ENCODE measurements at regions of chr17 and their contacts with region 1.

Region 1: DNA sequence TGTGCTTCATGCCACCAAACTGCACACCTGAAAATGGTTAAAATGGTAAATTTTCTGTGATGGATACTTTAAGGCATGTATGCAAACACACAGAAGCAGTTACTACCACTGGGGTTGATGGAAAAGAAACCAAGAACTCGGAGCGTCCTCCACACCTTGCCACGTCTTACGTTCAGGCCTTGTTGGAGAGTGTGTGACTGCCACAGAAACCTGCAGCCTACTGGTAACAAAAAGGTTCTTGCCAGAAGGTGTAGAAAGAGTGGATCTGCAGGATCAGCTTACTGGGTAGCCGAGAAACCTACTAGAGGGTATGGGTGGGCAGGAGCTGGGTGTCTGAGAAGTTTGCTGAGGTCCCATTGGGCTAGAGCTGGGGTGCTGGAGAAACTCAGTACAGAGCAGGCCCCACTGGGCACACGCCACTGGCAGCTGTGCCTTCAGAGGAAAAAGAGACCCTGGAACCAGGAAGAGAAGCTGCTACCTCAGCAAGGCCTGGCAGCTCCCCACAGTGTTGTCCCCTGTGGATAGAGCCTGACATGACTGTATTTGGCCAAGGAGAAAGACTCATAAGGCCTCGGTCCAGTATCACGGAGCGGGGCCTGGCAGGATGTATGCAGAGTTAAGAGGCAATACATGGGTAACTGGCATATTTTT is 204.6 kb downstream of the SEC14L1 start:
- DNase-seq: no peak
- H3K4me3 Mint-ChIP-seq: no peak overlapping the region
- H3K27ac Mint-ChIP-seq: no peak overlapping the region
- H3K4me1 Mint-ChIP-seq: peaks cover 45% of the 10 kb centered on the region
- H3K27me3 Mint-ChIP-seq: peaks cover under 1% of the 10 kb centered on the region

Region 2: DNA sequence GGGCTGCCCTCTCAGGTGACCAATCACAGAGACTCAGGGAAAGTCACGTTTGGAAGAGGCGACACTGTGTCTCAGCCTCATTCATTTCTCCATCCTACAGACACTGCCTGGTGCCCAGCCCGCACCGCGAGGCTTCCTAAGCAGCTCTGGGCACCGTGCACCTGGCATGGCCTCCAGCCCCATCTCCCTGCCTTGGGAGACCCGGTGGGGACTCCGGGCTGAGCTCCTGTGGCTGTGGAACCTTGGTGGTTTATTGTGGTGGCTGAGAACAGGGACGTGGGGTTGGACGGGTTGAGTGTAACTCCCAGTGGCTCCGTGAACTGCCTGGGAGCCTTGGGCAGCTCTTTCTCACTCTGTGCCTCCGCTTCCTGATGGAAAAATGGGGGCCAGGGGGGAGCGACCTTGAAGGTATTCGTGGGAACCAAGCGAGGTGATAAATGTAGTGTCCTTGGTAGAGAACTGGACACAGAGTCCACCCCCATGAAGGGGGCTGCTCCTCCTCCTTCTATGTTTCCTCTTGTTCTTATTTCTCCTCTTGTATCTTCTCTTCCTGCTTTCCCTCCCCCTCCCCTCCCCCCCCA is 10.8 kb after region 1 on chr17:
- intact Hi-C with region 1: loop called (anchors 2 kb)
- DNase-seq: no peak
- H3K4me3 Mint-ChIP-seq: no peak overlapping the region
- H3K27ac Mint-ChIP-seq: no peak overlapping the region
- H3K4me1 Mint-ChIP-seq: peaks cover 20% of the 10 kb centered on the region
- H3K27me3 Mint-ChIP-seq: peaks cover 7% of the 10 kb centered on the region

Region 3: GRCh38 chr17:77372444-77373298 is 27.3 kb after region 1 on chr17:
- intact Hi-C with region 1: loop called (anchors 2 kb)
- DNase-seq: peak; percentile 76
- H3K4me3 Mint-ChIP-seq: peak overlapping the region; percentile 76
- H3K27ac Mint-ChIP-seq: peak overlapping the region; percentile 68
- H3K4me1 Mint-ChIP-seq: peaks cover 57% of the 10 kb centered on the region
- H3K27me3 Mint-ChIP-seq: no peaks in the 10 kb centered on the region

Region 4: GRCh38 chr17:77444984-77445759 is 99.8 kb after region 1 on chr17:
- intact Hi-C with region 1: no loop called
- DNase-seq: peak; percentile 80
- H3K4me3 Mint-ChIP-seq: peak overlapping the region; percentile 79
- H3K27ac Mint-ChIP-seq: peak overlapping the region; percentile 97
- H3K4me1 Mint-ChIP-seq: peaks cover 85% of the 10 kb centered on the region
- H3K27me3 Mint-ChIP-seq: no peaks in the 10 kb centered on the region